MCF 10A (cell line): ENCODE measurements at regions of chr1 and their contacts with region 1.

Region 1: DNA sequence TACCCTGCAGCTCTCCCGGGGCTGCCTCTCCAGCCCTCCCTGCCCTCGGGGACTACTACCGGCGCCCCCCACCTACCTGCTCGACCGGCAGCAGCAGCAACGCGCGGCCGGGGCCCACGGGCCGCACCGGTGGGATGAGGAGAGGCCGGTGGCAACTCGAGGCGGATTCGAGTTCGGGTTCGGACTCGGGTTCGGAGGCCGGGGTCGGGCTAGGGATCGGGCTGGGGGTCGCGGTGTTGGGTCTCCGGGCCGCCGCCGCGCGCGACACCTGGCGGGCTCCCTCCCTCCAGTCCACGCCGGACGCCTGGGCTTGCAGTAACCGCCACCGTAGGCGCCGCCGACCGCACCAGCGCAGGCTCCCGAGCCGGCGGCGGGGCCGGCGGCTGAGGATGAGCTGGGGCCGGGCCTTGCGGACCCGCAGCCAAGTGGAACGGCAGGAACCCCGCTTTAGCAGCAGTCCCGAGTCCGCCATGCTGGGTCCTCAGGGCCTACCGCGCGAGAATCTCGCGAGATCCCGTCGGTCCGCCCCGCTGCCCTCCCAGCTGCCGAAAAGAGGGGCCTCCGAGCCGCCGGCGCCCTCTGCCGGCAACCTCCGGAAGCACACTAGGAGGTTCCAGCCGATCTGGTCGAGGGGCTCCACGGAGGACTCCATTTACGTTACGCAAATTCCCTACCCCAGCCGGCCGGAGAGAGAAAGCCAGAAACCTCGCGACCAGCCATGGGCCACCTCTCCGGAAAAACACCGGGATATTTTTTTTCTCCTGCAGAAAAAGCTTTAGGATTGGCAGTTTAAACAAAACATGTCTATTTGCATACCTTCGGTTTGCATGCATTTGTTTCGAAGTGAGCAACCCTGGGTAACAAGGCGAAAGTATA is at the start of gene NOL9:
- DNase-seq: peak; percentile 87
- H3K4me3 Mint-ChIP-seq: peak within 1 kb of the TSS; percentile 74
- H3K27ac Mint-ChIP-seq: peak within 1 kb of the TSS; percentile 74
- H3K4me1 Mint-ChIP-seq: peaks cover 9% of the 10 kb centered on the region
- H3K27me3 Mint-ChIP-seq: no peaks in the 10 kb centered on the region
- CTCF ChIP-seq: peak; percentile 94
- total RNA-seq, gene NOL9: 49.2 and 62.3 TPM in 2 replicates

Region 2: DNA sequence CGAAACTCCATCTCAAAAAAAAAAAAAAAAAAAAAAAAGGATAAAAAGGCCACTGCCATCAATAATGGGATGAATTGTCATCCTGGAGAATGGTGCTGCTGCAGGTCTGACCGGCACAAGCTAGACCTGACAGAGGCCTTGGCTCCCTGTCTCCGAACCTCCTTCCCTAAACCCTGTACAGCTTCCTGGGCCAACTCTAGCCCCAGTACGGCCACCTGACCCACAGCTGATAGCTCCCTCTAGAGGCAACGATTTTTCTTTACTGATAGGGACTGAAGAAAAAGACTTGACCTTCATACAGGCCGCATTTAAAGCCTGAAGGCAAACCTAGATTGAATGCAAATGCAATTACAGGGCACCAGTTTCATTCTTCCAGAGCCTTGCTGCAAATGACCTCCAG is 30.7 kb before region 1 on chr1:
- CTCF ChIA-PET with region 1: interaction called, 37 read pairs
- POLR2A ChIA-PET with region 1: interaction called, 5 read pairs
- intact Hi-C with region 1: no loop called
- DNase-seq: peak; percentile 64
- H3K4me3 Mint-ChIP-seq: no peak overlapping the region
- H3K27ac Mint-ChIP-seq: no peak overlapping the region
- H3K4me1 Mint-ChIP-seq: peaks cover 24% of the 10 kb centered on the region
- H3K27me3 Mint-ChIP-seq: no peaks in the 10 kb centered on the region
- CTCF ChIP-seq: peak; percentile 47

Region 3: GRCh38 chr1:6569033-6569432 is 14.8 kb after region 1 on chr1:
- CTCF ChIA-PET with region 1: interaction called, 13 read pairs
- POLR2A ChIA-PET with region 1: no interaction called
- intact Hi-C with region 1: no loop called
- DNase-seq: no peak
- H3K4me3 Mint-ChIP-seq: no peak overlapping the region
- H3K27ac Mint-ChIP-seq: no peak overlapping the region
- H3K4me1 Mint-ChIP-seq: no peaks in the 10 kb centered on the region
- H3K27me3 Mint-ChIP-seq: peaks cover 13% of the 10 kb centered on the region
- CTCF ChIP-seq: no peak

Region 4: GRCh38 chr1:6579374-6580118 is 25.3 kb after region 1 on chr1 and contains the start of gene ZBTB48:
- CTCF ChIA-PET with region 1: interaction called, 15 read pairs
- POLR2A ChIA-PET with region 1: interaction called, 33 read pairs
- intact Hi-C with region 1: no loop called
- DNase-seq: peak; percentile 99
- H3K4me3 Mint-ChIP-seq: peak within 1 kb of the TSS; percentile 94
- H3K27ac Mint-ChIP-seq: peak within 1 kb of the TSS; percentile 100
- H3K4me1 Mint-ChIP-seq: peaks cover 27% of the 10 kb centered on the region
- H3K27me3 Mint-ChIP-seq: no peaks in the 10 kb centered on the region
- CTCF ChIP-seq: no peak
- total RNA-seq, gene ZBTB48: 40.6 TPM in 2 replicates

Region 5: GRCh38 chr1:6686294-6686693 is 132.0 kb after region 1 on chr1:
- CTCF ChIA-PET with region 1: no interaction called
- POLR2A ChIA-PET with region 1: no interaction called
- intact Hi-C with region 1: no loop called
- DNase-seq: no peak
- H3K4me3 Mint-ChIP-seq: no peak overlapping the region
- H3K27ac Mint-ChIP-seq: no peak overlapping the region
- H3K4me1 Mint-ChIP-seq: peaks cover 8% of the 10 kb centered on the region
- H3K27me3 Mint-ChIP-seq: no peaks in the 10 kb centered on the region
- CTCF ChIP-seq: no peak

Region 6: GRCh38 chr1:7808253-7808844 is 1254.1 kb after region 1 on chr1:
- CTCF ChIA-PET with region 1: no interaction called
- POLR2A ChIA-PET with region 1: no interaction called
- intact Hi-C with region 1: no loop called
- DNase-seq: peak; percentile 44
- H3K4me3 Mint-ChIP-seq: no peak overlapping the region
- H3K27ac Mint-ChIP-seq: no peak overlapping the region
- H3K4me1 Mint-ChIP-seq: no peaks in the 10 kb centered on the region
- H3K27me3 Mint-ChIP-seq: no peaks in the 10 kb centered on the region
- CTCF ChIP-seq: peak; percentile 60